Activated CD4-positive, alpha-beta memory T cell treated with anti-CD3 and anti-CD28 coated beads for 36 hours (primary cell): ENCODE measurements at regions of chr2 and their contacts with region 1.

Region 1: DNA sequence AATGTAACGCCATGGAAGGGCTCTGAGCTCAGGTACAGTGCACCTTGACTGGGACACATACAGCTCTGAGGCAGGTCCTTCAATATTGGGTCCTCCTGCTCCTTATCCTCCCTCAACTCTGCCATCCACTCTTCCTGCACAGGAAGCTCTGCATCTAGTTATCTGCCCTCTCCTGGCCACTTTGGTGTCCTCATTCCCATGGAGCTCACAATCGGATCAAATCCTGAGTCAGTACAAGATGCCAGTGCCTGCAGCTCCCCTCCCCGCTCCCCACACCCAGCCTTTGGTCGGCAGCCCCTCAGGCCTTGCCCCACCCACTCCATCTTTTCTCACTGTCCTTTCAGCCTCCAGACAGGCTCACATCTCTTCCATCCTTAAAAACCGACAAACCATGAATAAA is 58.0 kb downstream of the LRRFIP1 start:
- DNase-seq: peak; percentile 7
- H3K4me3 Mint-ChIP-seq: no peak overlapping the region
- H3K27ac Mint-ChIP-seq: no peak overlapping the region
- H3K4me1 Mint-ChIP-seq: peaks cover 41% of the 10 kb centered on the region
- H3K27me3 Mint-ChIP-seq: no peaks in the 10 kb centered on the region

Region 2: GRCh38 chr2:237529452-237530402 is 155.7 kb before region 1 on chr2:
- CTCF ChIA-PET with region 1: no interaction called
- POLR2A ChIA-PET with region 1: no interaction called
- intact Hi-C with region 1: no loop called
- DNase-seq: no peak
- H3K4me3 Mint-ChIP-seq: no peak overlapping the region
- H3K27ac Mint-ChIP-seq: no peak overlapping the region
- H3K4me1 Mint-ChIP-seq: no peaks in the 10 kb centered on the region
- H3K27me3 Mint-ChIP-seq: no peaks in the 10 kb centered on the region

Region 3: DNA sequence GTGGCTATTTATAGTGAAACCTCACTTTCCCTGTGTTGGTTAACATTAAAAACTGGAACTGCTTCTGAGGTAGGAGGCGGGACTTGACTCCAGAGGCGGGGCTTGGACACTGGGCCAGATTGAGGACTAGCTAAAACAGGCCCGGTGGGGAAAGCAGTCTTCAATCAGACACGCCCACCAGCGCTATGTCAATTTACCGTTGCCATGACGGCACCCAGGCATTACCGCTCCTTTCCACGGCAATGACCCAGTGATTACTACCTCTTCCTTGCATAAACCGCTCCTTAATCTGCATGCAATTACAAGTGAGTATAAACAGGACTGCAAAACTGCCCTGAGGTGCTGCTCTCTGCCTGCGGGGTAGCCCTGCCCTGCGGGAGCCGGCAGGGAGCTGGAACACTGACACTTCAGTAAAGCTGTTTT is 22.7 kb before region 1 on chr2:
- CTCF ChIA-PET with region 1: no interaction called
- POLR2A ChIA-PET with region 1: no interaction called
- intact Hi-C with region 1: no loop called
- DNase-seq: peak; percentile 77
- H3K4me3 Mint-ChIP-seq: no peak overlapping the region
- H3K27ac Mint-ChIP-seq: no peak overlapping the region
- H3K4me1 Mint-ChIP-seq: peaks cover 6% of the 10 kb centered on the region
- H3K27me3 Mint-ChIP-seq: peaks cover 10% of the 10 kb centered on the region

Region 4: GRCh38 chr2:237700512-237701032 is 15.2 kb after region 1 on chr2:
- CTCF ChIA-PET with region 1: no interaction called
- POLR2A ChIA-PET with region 1: interaction called, 16 read pairs
- intact Hi-C with region 1: loop called (anchors 1 kb)
- DNase-seq: peak; percentile 90
- H3K4me3 Mint-ChIP-seq: peak overlapping the region; percentile 54
- H3K27ac Mint-ChIP-seq: peak overlapping the region; percentile 98
- H3K4me1 Mint-ChIP-seq: peaks cover 94% of the 10 kb centered on the region
- H3K27me3 Mint-ChIP-seq: no peaks in the 10 kb centered on the region